HEK293 (cell line): ENCODE measurements at regions of chr6 and their contacts with region 1.

Region 1: DNA sequence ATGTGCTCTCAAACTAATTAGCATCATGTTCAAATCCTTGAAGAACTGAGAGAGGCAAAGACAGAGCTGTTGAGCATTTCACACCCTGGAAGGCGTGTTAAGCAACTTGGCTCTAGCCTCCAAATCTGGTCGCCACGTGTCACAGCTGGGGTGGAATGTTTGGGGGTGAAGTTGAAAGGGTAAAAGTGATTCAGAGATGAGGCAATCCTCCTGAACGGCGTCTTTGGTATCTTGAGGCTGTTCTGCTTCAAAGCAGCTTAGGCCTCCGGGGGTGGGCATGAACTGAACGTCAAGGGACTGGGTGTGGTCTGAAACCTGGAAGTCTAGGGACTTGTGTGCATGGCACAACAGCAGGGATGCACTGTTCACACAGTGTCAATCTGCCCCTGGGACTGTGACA is 62.3 kb downstream of the TRAM2 start:
- H3K4me3 ChIP-seq: no peak overlapping the region
- H3K27ac ChIP-seq: no peak overlapping the region
- H3K4me1 ChIP-seq: peaks cover 6% of the 10 kb centered on the region; the same call in 1 of the 2 replicates
- CTCF ChIP-seq: no peak

Region 2: DNA sequence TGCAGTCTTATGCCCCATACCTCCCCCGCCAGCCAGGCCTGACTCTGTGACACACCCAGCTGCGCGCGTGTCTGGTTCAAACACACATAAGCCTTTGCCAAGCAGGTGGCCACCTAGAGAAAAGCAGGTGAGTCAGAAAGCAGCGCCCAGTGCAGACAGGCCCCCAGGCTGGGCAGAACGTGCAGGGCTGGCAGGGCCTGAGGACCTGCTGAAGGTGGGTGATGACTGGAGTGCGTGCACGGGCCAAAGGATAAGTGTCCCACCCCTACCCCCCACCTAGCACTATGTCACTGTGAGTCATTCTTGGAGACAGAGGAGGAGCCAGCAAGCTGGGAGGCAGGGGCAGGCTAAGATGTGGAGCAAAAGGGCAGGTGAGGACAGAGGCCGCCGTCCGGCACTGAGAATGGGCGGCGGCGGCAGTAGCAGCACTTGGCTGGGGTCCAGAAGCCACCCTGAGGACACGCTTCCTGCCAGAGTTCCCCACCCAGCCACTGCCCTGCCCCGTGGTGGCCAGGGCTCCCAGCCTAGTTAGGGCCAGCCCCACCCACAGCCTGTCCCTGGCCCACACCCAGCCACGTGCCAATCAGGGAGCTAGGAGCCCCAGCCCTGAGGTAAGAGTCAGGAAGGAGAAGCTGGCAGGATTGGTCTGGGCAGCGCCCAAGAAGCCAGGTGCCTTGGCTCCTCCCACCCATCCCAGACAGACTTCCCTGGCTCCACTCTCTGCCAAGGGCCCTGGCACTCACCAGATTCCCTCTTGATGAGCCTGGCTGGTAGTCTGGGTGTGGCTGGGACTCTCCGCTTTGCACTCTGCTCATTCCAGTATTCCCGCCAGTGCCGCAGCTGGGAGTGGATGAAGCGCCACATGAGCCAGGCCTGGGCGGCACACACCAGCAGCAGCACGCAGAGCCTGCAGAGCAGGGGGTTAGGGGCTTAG is 10.4 kb before region 1 on chr6:
- CTCF ChIA-PET with region 1: interaction called, 7 read pairs
- POLR2A ChIA-PET with region 1: interaction called, 17 read pairs
- H3K4me3 ChIP-seq: no peak overlapping the region; the same call in 1 of the 2 replicates
- H3K27ac ChIP-seq: peak overlapping the region; percentile 65
- H3K4me1 ChIP-seq: peaks cover 8% of the 10 kb centered on the region
- CTCF ChIP-seq: no peak

Region 3: GRCh38 chr6:52551401-52552277 is 37.1 kb after region 1 on chr6:
- CTCF ChIA-PET with region 1: interaction called, 3 read pairs
- POLR2A ChIA-PET with region 1: interaction called, 10 read pairs
- H3K4me3 ChIP-seq: no peak overlapping the region
- H3K27ac ChIP-seq: no peak overlapping the region; the same call in 1 of the 2 replicates
- H3K4me1 ChIP-seq: peaks cover 37% of the 10 kb centered on the region
- CTCF ChIP-seq: no peak

Region 4: GRCh38 chr6:52577022-52577777 is 62.7 kb after region 1 on chr6 and contains the start of gene TRAM2:
- CTCF ChIA-PET with region 1: interaction called, 10 read pairs
- POLR2A ChIA-PET with region 1: interaction called, 4 read pairs
- H3K4me3 ChIP-seq: peak within 1 kb of the TSS; percentile 67
- H3K27ac ChIP-seq: peak within 1 kb of the TSS; percentile 97
- H3K4me1 ChIP-seq: peaks cover 9% of the 10 kb centered on the region
- CTCF ChIP-seq: no peak